SK-N-SH (cell line): ENCODE measurements at regions of chr1 and their contacts with region 1.

Region 1: DNA sequence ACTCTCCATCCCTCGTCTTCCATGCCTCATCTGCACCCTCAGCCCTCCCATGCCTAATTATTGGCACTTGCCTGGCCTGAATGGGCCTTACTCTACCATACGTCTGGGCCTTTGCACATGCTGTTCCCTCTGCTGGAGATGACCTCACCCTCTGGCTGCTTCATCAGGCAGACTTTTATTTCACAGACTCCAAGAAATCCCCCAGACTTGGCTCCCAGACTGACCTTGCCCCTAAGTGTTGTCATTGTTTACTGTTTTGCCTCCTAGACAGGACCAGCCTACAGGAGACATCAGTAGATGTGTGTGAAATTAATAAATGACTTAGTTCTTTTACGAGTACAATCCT is 5.2 kb upstream of the AHDC1 start:
- DNase-seq: no peak
- H3K4me3 ChIP-seq: no peak overlapping the region
- H3K27ac ChIP-seq: no peak overlapping the region
- H3K4me1 ChIP-seq: peaks cover 5 to 11% of the 10 kb centered on the region in 2 experiments; a peak in 2 of 4 replicates
- H3K27me3 ChIP-seq: no peaks in the 10 kb centered on the region
- CTCF ChIP-seq: no peak
- EP300 ChIP-seq: no peak
- RAD21 ChIP-seq: no peak

Region 2: DNA sequence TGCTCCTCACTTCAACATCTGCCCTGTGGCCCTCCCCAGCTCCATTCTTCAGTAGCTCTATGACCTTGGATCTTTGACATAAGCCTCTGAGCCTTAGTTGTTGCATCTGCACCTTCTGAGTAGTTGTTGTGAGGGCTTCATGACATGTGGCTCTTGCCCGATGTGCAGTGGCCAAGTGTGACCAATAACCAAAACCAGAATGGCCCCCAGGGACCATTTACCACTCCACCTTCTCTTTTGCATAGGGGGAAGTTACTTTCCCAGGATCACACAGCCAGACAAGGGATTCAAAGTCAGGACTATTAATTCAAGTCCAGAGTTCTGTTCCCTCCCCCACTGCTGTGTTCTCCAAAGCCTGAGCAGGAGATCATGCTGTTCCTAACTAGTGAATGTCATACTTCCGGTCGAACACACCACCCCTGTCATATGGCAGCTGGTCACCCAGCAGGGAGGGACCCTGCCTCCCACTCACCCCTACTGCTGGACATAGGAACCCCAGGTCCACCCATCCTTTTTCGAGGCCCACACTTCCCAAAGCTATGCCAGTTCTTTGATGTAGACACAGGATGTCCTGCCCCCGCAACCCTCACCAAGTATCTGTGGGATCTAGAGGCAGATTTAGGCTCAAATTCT is 21.8 kb after region 1 on chr1:
- CTCF ChIA-PET with region 1: interaction called, 14 read pairs
- POLR2A ChIA-PET with region 1: no interaction called
- DNase-seq: no peak
- H3K4me3 ChIP-seq: no peak overlapping the region
- H3K27ac ChIP-seq: no peak overlapping the region
- H3K4me1 ChIP-seq: peaks cover 0 to 6% of the 10 kb centered on the region in 2 experiments; a peak in 1 of 4 replicates
- H3K27me3 ChIP-seq: no peaks in the 10 kb centered on the region
- CTCF ChIP-seq: no peak
- EP300 ChIP-seq: no peak
- RAD21 ChIP-seq: no peak

Region 3: DNA sequence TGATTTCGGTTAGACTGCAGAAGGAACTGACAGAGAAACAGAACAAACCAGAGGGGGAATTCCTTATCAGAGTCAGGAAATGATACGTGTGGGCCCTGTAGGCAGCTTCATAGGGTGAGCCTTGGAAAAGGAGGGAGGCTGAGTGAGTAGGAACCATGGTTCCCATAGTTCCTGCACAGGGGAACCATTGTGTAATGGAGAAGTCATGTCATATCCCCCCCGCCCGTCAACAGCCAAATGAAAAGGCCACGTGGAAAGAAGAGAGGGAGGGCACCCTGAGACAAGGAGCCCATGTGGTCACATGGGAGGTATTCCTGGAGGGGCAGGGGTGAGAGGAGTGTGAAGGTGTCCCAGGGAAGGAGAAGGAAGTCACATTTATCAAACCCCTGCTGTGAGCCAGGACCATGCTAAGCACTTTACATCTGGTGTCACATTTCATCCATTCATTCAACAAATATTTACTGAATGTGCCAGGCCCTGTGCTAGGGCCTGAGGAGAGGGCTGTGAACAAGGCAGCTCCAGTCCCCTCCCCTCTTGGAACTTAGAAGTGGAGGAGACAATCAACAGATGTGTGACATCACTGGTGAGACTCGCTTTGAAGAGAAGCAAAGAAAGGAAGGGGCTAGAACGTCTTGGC is 41.5 kb after region 1 on chr1:
- CTCF ChIA-PET with region 1: interaction called, 526 read pairs
- POLR2A ChIA-PET with region 1: no interaction called
- DNase-seq: no peak
- H3K4me3 ChIP-seq: no peak overlapping the region
- H3K27ac ChIP-seq: no peak overlapping the region
- H3K4me1 ChIP-seq: peaks cover 7% of the 10 kb centered on the region in 2 experiments; a peak in 2 of 4 replicates
- H3K27me3 ChIP-seq: no peaks in the 10 kb centered on the region
- CTCF ChIP-seq: no peak
- EP300 ChIP-seq: no peak
- RAD21 ChIP-seq: no peak